Posterior vena cava (tissue), 2 donors: ENCODE measurements at regions of chr6 and their contacts with region 1.

Region 1: DNA sequence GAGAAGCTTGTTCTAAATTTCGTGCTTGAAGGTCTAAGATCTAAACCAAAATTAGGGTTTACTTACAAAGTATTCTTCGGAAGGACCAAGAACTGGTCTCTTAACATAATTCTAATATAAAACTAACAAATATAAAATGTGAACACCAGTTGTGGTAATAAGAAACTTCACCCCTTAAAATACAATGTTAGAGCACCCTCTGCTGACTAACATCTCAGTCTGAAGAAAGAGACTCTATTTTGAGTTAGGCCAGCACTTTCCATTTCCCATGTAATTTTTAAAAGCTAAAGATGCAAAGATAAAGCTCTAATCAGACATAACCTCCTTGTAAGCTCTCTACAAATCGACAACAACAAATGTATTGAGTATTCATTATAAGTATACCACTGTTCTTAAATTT is 24.6 kb downstream of the ATG5 start:
- DNase-seq: no peak

Region 2: DNA sequence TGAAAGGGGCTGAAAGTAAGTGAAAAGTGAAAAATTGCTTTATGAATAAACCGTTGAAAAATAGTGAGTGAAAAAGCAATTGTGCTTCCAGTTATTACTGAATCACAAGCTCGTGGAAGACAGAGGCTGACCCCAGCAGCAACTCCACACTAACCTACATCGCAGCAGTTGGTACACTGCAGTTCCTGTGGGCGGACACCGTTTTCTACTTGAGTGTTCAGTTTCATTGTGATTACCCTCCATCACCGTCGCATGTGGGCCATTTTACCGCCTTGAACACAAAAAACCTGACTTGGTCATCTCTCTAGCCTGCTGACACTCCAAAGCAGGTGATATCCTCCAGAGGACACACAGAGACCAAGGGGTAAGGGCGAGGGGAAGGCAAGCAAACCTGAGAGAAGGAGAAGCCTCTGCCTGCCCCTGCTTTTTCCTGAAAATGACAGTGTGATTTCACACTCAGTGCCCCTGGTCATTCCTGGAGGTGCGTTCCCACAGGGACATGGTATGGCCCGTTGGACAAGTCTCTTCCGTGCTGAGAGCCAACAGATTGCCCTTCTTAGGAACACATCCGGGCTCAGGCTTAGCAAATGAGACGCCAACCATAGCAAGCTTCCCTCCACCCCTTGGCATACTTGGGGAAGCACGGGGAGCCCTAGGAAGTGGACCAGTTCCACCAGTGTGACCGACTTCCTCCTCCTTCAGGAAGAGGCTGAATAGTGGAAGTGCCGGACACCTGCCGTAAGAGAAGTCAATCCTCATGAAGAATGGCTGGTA is 186.3 kb before region 1 on chr6:
- intact Hi-C with region 1: loop called in 1 of 2 experiments (anchors 10 kb)
- DNase-seq: no peak